Posterior cingulate gyrus (tissue), 11 donors: ENCODE measurements at regions of chr1 and their contacts with region 1.

Region 1: DNA sequence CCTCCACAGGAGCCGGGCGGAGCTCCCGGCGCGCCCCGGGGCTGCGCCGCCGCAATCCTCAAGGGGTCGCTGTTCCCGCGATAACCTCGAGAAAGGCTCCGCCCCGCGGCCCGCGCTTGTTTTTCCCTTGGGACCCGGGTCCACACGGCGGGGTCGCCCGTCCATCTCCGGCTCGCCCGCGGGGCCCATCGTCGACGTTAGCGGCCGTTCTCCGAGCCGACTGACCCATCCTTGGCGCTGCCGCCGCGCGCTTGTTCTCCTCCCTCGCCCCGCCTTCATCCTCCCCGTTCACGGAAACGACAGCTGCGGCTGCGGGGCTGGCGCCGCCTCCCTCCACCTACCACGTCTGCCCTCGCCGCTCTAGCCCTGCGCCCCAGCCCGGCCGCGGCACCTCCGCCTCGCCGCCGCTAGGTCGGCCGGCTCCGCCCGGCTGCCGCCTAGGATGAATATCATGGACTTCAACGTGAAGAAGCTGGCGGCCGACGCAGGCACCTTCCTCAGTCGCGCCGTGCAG is at the start of gene SH3GLB1:
- DNase-seq: peak; percentile 79 to 98 (median 90)

Region 2: DNA sequence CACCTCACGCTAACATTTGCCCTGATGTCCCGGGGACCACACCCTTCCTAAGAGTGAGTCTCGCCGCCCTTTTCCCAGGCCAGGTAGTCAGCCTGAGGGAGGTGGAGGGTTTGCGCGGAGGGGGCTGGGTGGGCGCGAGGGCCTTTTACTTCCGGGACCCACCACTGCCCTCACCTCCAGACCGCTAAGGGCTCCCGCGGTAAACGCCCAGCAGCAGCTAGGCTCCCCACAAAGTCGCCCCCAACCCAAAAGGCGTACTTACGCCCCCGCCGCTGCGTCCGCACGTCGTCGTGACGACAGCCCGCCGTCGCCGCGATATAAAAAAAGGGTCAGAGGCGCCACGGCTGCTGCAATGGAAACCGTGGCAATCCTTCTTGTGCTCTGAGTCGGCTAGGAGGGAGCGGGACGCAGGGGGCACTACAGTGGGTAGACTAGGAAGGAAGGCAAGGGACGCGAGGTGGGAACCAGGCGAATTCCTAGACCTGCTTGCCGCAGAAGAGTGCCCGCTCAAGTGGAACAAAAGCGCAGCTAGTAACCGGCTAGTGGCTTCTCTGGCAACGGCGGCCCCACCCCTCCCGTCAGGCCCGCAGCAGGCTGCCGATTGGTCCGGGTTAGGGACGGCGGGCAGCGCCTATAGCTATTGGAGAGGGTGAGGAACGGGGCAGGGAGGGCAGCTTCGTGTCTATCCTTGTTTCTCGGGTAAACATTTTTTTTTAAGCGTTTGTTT is 308.6 kb before region 1 on chr1 and contains the start of gene ODF2L:
- intact Hi-C with region 1: loop called (anchors 10 kb)
- DNase-seq: peak; percentile 86 to 99 (median 95)

Region 3: DNA sequence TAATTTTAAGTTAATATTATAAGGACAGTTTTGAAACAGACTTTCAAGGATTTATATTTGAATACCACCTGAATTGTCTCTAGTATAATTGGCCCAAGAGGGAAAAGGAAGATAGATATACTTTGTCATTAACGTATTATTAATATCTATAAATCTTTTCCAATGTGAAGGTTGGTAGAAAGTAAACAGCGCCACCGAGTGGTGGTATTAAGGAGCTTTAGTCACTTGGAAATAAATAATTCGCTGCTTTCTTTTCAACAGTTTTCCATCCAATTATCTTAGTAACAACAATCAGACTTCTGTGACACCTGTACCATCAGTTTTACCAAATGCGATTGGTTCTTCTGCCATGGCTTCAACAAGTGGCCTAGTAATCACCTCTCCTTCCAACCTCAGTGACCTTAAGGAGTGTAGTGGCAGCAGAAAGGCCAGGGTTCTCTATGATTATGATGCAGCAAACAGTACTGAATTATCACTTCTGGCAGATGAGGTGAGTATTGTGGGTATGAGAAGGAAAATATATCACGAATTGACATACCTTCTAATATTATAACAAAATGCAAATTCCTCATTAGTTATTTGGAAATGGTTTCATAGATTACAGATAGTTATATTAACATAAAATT is 37.5 kb after region 1 on chr1:
- intact Hi-C with region 1: no loop called
- DNase-seq: peak in 1 of 10 donors; percentile 39

Region 4: GRCh38 chr1:86913896-86914634 is 209.6 kb after region 1 on chr1 and contains the start of gene SELENOF:
- intact Hi-C with region 1: loop called (anchors 1 kb)
- DNase-seq: peak; percentile 94 to 100 (median 97)

Region 5: GRCh38 chr1:87084244-87084836 is 379.8 kb after region 1 on chr1:
- intact Hi-C with region 1: loop called (anchors 10 kb)
- DNase-seq: no peak